CD4-positive, alpha-beta T cell (primary cell): ENCODE measurements at regions of chr12 and their contacts with region 1.

Region 1: GRCh38 chr12:31890295-31891285 is 68.6 kb upstream of the RESF1 start:
- DNase-seq: peak in 4 of 14 experiments; percentile 30 to 89 (median 67)
- ATAC-seq: peak; percentile 92
- H3K4me3 ChIP-seq: no peak overlapping the region
- H3K4me3 Mint-ChIP-seq: peak overlapping the region; percentile 60
- H3K27ac ChIP-seq: peak overlapping the region; percentile 55 to 68
- H3K27ac Mint-ChIP-seq: peak overlapping the region; percentile 89
- H3K4me1 ChIP-seq: peaks cover 81% of the 10 kb centered on the region
- H3K4me1 Mint-ChIP-seq: peaks cover 63% of the 10 kb centered on the region
- H3K27me3 ChIP-seq: no peaks in the 10 kb centered on the region
- H3K27me3 Mint-ChIP-seq: no peaks in the 10 kb centered on the region
- CTCF ChIP-seq: no peak

Region 2: DNA sequence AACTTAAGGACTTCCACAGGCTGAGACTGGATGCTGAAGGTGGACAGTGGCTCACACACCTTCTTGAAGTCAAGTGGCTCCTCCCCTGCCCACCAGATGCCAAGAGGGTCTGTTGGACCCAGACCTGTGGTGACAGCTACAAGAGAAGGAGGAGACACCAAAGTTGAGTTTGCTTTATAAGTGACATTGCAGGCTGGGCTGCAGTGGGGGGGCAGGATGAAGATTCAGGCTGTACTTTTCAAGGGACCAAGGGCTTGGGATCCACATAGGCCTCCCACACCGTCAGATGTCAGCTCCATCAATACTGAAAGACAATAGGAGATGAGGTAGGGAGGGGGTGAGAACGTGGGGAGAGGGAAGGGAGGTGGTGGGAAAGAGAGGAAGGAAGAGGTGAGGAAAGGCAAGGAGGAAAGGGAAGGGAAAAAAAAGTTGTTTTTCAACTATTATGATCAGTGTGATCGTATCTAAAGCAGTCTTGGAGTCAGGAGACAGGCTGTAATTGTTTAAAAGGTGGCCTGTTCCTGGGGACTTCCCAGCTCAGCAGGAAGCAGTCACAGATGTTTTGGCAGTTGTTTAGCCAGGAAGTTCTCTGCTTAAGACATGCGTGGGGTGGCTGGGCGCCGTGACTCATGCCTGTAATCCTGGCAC is 15.5 kb before region 1 on chr12:
- CTCF ChIA-PET with region 1: no interaction called
- POLR2A ChIA-PET with region 1: interaction called, 29 read pairs
- intact Hi-C with region 1: no loop called
- DNase-seq: peak; percentile 51 to 94 (median 68)
- ATAC-seq: peak; percentile 95
- H3K4me3 ChIP-seq: no peak overlapping the region
- H3K4me3 Mint-ChIP-seq: peak overlapping the region; percentile 82
- H3K27ac ChIP-seq: peak overlapping the region; percentile 78 to 92
- H3K27ac Mint-ChIP-seq: peak overlapping the region; percentile 99
- H3K4me1 ChIP-seq: peaks cover 25% of the 10 kb centered on the region
- H3K4me1 Mint-ChIP-seq: peaks cover 60% of the 10 kb centered on the region
- H3K27me3 ChIP-seq: no peaks in the 10 kb centered on the region
- H3K27me3 Mint-ChIP-seq: no peaks in the 10 kb centered on the region
- CTCF ChIP-seq: no peak

Region 3: GRCh38 chr12:31928246-31929026 is 37.8 kb after region 1 on chr12:
- CTCF ChIA-PET with region 1: interaction called, 4 read pairs
- POLR2A ChIA-PET with region 1: interaction called, 23 read pairs
- intact Hi-C with region 1: loop called in 1 of 2 experiments (anchors 5 kb)
- DNase-seq: peak in 12 of 14 experiments; percentile 6 to 67 (median 22)
- ATAC-seq: peak; percentile 79
- H3K4me3 ChIP-seq: peak overlapping the region; percentile 39
- H3K4me3 Mint-ChIP-seq: peak overlapping the region; percentile 85
- H3K27ac ChIP-seq: peak overlapping the region; percentile 51 to 62
- H3K27ac Mint-ChIP-seq: peak overlapping the region; percentile 95
- H3K4me1 ChIP-seq: peaks cover 45% of the 10 kb centered on the region
- H3K4me1 Mint-ChIP-seq: peaks cover 51% of the 10 kb centered on the region
- H3K27me3 ChIP-seq: no peaks in the 10 kb centered on the region
- H3K27me3 Mint-ChIP-seq: no peaks in the 10 kb centered on the region
- CTCF ChIP-seq: no peak